ENCODE measurements at regions of chr4 and their contacts with region 1.

Region 1: DNA sequence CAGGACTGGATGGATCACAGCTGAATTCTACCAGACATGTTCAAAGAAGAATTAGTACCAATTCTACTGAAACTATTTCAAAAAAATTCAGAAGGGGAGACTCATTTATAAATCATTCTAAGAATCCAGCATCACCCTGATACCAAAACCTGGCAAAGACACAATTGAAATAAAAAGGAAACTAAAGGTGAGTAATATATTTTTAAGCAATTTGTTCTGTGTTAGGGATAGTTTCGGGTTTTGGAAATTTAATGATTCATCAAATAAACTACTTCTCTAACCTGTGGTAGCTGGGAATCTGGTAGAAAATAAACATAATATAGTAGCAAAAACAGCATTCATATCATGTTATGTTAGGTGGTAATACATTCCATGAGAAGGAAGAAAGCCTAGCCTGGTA is 662.2 kb upstream of the BOD1L1 start:
- DNase-seq: no peak
- H3K4me3 ChIP-seq: no peak overlapping the region
- H3K27ac ChIP-seq: no peak overlapping the region
- H3K4me1 ChIP-seq: no peaks in the 10 kb centered on the region
- H3K27me3 ChIP-seq: no peaks in the 10 kb centered on the region
- CTCF ChIP-seq: no peak
- EP300 ChIP-seq: no peak
- POLR2A ChIP-seq: no peak

Region 2: GRCh38 chr4:13570916-13571315 is 718.8 kb before region 1 on chr4:
- in situ Hi-C with region 1: no loop called
- intact Hi-C with region 1: no loop called
- DNase-seq: no peak
- H3K4me3 ChIP-seq: no peak overlapping the region
- H3K27ac ChIP-seq: no peak overlapping the region
- H3K4me1 ChIP-seq: no peaks in the 10 kb centered on the region
- H3K27me3 ChIP-seq: no peaks in the 10 kb centered on the region
- CTCF ChIP-seq: no peak
- EP300 ChIP-seq: no peak
- POLR2A ChIP-seq: no peak

Region 3: GRCh38 chr4:14345356-14345775 is 55.7 kb after region 1 on chr4:
- in situ Hi-C with region 1: no loop called
- intact Hi-C with region 1: no loop called
- DNase-seq: no peak
- H3K4me3 ChIP-seq: no peak overlapping the region
- H3K27ac ChIP-seq: no peak overlapping the region
- H3K4me1 ChIP-seq: no peaks in the 10 kb centered on the region
- H3K27me3 ChIP-seq: no peaks in the 10 kb centered on the region
- CTCF ChIP-seq: no peak
- EP300 ChIP-seq: no peak
- POLR2A ChIP-seq: no peak

Region 4: GRCh38 chr4:14404730-14405129 is 115.0 kb after region 1 on chr4:
- in situ Hi-C with region 1: no loop called
- intact Hi-C with region 1: no loop called
- DNase-seq: no peak
- H3K4me3 ChIP-seq: no peak overlapping the region
- H3K27ac ChIP-seq: no peak overlapping the region
- H3K4me1 ChIP-seq: no peaks in the 10 kb centered on the region
- H3K27me3 ChIP-seq: no peaks in the 10 kb centered on the region
- CTCF ChIP-seq: no peak
- EP300 ChIP-seq: no peak
- POLR2A ChIP-seq: no peak

Region 5: DNA sequence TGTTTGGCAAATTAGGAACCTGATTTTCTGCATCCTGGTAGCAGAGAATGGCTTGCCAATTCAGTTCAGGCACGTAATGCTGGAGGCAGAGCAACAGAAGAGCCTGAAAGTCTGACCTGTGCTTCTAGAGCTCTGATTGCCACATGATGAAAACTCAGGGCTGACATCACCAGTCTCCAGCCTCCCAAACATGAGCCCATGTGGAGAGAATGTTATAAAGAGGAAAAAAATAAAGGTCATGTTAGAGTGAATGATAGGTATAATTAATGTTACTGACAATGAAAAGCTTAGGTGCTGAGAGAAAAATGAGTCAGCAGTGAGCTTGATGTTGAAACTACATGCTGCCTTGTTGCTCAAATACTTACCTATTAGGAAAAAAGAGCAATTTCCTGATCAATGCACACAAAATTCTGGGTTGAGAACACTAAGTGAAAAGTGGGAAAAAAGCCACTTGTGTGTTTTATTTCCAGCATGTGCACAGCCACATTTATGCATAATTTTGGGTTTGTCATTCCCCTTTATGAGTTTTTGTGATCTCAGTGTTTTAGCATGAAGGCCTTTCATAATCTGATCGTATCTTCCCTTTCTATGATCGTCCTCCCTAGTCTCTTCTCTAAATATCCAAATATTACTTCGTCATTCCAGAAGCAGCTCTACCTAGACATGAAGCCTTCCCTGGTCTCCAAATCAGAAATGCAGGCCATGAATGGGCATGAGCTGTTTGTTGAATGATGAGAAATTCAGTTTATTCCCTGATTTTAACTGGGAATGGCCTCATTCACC is 599.3 kb after region 1 on chr4:
- in situ Hi-C with region 1: no loop called
- intact Hi-C with region 1: loop called (anchors 5 kb)
- DNase-seq: no peak
- H3K4me3 ChIP-seq: no peak overlapping the region
- H3K27ac ChIP-seq: no peak overlapping the region
- H3K4me1 ChIP-seq: no peaks in the 10 kb centered on the region
- H3K27me3 ChIP-seq: no peaks in the 10 kb centered on the region
- CTCF ChIP-seq: no peak
- EP300 ChIP-seq: no peak
- POLR2A ChIP-seq: no peak

Measured in transverse colon (tissue), 4 donors.